ENCODE measurements at regions of chr7 and their contacts with region 1.

Region 1: DNA sequence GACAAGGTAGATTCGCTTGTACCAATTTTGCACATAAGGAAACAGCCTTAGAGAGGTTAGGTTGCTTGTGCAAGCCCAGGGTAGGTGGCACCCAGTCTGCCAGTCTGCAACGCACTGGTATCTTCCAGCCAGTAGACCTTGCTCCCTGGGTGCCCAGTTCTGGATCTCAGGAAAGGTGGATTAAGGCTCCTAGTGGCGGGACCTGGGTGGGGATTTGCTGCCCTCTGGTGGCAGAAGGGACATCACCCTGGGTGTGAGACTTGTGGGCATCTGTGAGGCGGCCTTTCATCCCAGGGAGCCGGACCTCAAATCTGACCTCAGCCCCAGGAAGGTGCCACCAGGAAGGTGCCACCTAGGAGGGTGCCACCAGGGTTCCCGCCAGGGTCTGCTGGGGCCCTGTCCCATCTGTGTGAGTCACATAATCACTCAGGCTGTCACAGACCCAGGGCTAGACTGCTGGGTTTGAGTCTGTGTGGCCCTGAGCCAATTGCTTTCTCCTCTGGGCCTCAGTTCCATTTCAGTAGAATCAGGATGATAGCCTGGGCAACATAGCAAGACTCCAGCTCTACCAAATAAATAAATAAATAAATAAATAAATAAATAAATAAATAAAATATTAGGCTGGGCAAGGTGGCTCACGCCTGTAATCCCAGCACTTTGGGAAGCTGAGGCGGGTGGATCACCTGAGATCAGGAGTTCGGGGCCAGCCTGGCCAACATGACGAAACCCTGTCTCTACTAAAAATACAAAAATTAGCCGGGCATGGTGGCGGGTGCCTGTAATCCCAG is 5.3 kb upstream of the PRKRIP1 start:
- DNase-seq: peak; percentile 81
- ATAC-seq: peak; percentile 72
- H3K4me3 ChIP-seq: no peak overlapping the region
- H3K4me3 Mint-ChIP-seq: no peak overlapping the region
- H3K27ac ChIP-seq: no peak overlapping the region
- H3K27ac Mint-ChIP-seq: no peak overlapping the region
- H3K4me1 ChIP-seq: peaks cover 6 to 14% of the 10 kb centered on the region in 2 donors
- H3K4me1 Mint-ChIP-seq: peaks cover 15% of the 10 kb centered on the region
- H3K27me3 ChIP-seq: no peaks in the 10 kb centered on the region
- H3K27me3 Mint-ChIP-seq: no peaks in the 10 kb centered on the region
- CTCF ChIP-seq: peak; percentile 89

Region 2: GRCh38 chr7:101754424-101755159 is 636.3 kb before region 1 on chr7:
- CTCF ChIA-PET with region 1: no interaction called
- POLR2A ChIA-PET with region 1: no interaction called
- intact Hi-C with region 1: no loop called
- DNase-seq: no peak
- ATAC-seq: no peak
- H3K4me3 ChIP-seq: peak overlapping the region in 4 of 5 experiments; percentile 39 to 69 (median 50)
- H3K4me3 Mint-ChIP-seq: peak overlapping the region; percentile 86
- H3K27ac ChIP-seq: no peak overlapping the region
- H3K27ac Mint-ChIP-seq: peak overlapping the region; percentile 22
- H3K4me1 ChIP-seq: peaks cover 8 to 9% of the 10 kb centered on the region in 2 donors
- H3K4me1 Mint-ChIP-seq: peaks cover 11% of the 10 kb centered on the region
- H3K27me3 ChIP-seq: peaks cover 0 to 2% (median 0%) of the 10 kb centered on the region in 4 experiments
- H3K27me3 Mint-ChIP-seq: peaks cover 22% of the 10 kb centered on the region
- CTCF ChIP-seq: no peak

Region 3: DNA sequence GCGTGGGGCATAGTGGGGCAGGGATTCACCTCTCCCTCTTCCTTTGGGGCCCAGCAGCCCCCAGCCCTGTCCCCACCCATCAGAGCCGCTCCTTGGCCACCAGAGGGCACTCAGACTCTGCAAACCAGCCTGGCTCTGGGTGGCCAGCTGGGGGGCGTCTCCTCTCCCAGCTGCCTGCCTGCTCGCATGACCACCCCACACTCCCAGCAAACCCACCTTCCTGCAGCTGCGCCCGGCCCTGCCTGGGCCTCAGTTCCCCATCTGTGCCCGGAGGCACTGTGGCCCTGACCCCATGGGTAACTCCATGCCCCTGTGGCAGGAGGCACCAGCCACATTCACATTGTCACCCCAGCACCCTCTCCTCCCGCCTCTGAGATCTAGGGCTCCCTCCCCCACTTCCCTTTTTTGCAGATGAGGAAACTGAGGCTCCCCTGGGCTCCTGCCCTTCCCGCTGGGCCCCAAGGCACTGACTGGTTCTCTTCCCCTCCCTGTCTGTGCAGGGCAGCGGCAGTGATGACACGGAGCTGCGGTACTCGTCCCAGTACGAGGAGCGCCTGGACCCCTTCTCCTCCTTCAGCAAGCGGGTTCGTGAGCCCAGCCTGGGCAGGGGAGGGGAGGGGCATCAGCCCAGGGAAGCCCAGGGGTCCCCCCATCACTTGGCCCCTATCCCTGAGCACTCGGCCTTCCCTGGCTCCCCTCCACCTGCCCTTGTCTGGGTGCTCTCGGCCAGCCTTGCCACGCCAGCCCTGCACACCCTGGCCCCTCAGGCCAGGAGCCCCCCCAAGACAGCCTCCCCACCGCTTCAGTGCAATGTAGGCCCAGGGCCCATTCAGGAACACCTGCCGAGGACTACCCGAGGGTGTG is 111.1 kb before region 1 on chr7:
- CTCF ChIA-PET with region 1: interaction called, 351 read pairs
- POLR2A ChIA-PET with region 1: interaction called, 7 read pairs
- intact Hi-C with region 1: loop called (anchors 1 kb)
- DNase-seq: peak; percentile 84
- ATAC-seq: peak; percentile 90
- H3K4me3 ChIP-seq: peak overlapping the region in 3 of 5 experiments; percentile 13 to 44 (median 15)
- H3K4me3 Mint-ChIP-seq: peak overlapping the region; percentile 83
- H3K27ac ChIP-seq: no peak overlapping the region
- H3K27ac Mint-ChIP-seq: peak overlapping the region; percentile 84
- H3K4me1 ChIP-seq: peaks cover 17 to 24% of the 10 kb centered on the region in 2 donors
- H3K4me1 Mint-ChIP-seq: peaks cover 28% of the 10 kb centered on the region
- H3K27me3 ChIP-seq: no peaks in the 10 kb centered on the region
- H3K27me3 Mint-ChIP-seq: no peaks in the 10 kb centered on the region
- CTCF ChIP-seq: peak; percentile 87

Measured in B cell (primary cell).